ENCODE measurements at regions of chr13 and their contacts with region 1.

Region 1: DNA sequence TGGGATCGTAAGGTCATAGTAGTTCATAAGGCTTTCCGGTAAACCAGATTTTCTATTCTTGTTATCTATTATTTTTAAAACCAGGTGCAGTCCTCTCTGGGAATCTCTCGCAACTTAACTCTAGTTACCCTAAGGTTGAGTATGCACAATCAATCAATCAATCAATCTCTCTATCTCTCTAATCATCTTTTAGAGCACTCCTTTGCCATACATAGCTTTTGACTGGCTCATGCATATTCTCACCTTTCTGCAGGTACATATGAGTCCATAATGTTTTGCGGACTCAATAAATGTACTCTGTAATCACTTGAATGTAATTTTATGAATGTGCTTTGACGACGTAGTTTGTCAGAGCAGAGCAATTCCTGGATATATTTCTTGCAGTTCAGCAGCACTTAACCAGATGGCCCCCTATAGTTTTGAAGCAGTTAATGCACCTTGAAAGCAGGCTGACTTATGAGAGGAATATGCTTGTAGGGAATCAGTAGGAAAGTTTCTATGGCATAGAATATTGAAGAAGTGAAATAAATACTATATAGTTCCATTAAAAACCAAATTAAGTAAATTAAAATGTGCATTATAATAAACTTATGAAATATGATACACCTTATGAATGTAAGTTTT is 524.7 kb downstream of the GPC5 start:
- DNase-seq: no peak
- H3K4me3 ChIP-seq: no peak overlapping the region
- H3K27ac ChIP-seq: no peak overlapping the region
- H3K4me1 ChIP-seq: no peaks in the 10 kb centered on the region
- H3K27me3 ChIP-seq: no peaks in the 10 kb centered on the region
- CTCF ChIP-seq: no peak

Region 2: GRCh38 chr13:91845612-91846011 is 77.5 kb before region 1 on chr13:
- intact Hi-C with region 1: loop called (anchors 2 kb)
- DNase-seq: no peak
- H3K4me3 ChIP-seq: no peak overlapping the region
- H3K27ac ChIP-seq: no peak overlapping the region
- H3K4me1 ChIP-seq: no peaks in the 10 kb centered on the region
- H3K27me3 ChIP-seq: no peaks in the 10 kb centered on the region
- CTCF ChIP-seq: no peak